CD14-positive monocyte (primary cell): ENCODE measurements at regions of chr11 and their contacts with region 1.

Region 1: DNA sequence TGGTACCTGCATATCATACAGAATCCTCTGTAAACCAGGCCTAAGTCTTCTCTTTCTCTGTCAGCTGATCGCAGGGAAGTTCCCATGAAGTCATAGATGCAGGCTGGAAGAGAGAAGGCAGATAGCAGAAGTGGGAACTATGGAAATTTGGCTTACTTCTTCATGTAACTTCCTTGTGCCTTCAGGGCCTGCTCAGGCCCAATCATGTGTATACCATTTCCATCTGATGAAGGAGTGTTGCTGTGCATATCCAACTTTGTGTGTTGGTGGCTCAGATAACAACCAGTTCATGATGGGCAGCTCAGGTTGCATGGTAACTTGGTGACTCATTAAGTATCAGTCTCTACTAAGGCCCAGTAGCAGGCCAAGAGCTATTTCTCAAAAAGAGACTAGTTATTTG is 53.1 kb upstream of the CEP295 start:
- DNase-seq: peak; percentile 83 to 97 (median 86)
- H3K4me3 ChIP-seq: peak overlapping the region in 1 of 3 experiments; percentile 22
- H3K4me3 Mint-ChIP-seq: no peak overlapping the region
- H3K27ac ChIP-seq: peak overlapping the region; percentile 57 to 83
- H3K27ac Mint-ChIP-seq: peak overlapping the region; percentile 86 to 98 (median 93)
- H3K4me1 ChIP-seq: peaks cover 74 to 77% of the 10 kb centered on the region in 2 donors
- H3K4me1 Mint-ChIP-seq: peaks cover 64% of the 10 kb centered on the region
- H3K27me3 ChIP-seq: no peaks in the 10 kb centered on the region
- H3K27me3 Mint-ChIP-seq: peaks cover 0 to 3% (median 0%) of the 10 kb centered on the region in 3 donors
- CTCF ChIP-seq: no peak

Region 2: GRCh38 chr11:93529707-93530467 is 78.5 kb before region 1 on chr11:
- intact Hi-C with region 1: loop called in 1 of 2 experiments (anchors 10 kb)
- DNase-seq: peak; percentile 59 to 71 (median 69)
- H3K4me3 ChIP-seq: peak overlapping the region in 1 of 3 experiments; percentile 30
- H3K4me3 Mint-ChIP-seq: peak overlapping the region in 1 of 2 donors; percentile 70
- H3K27ac ChIP-seq: peak overlapping the region; percentile 72 to 84
- H3K27ac Mint-ChIP-seq: peak overlapping the region; percentile 84 to 94 (median 92)
- H3K4me1 ChIP-seq: peaks cover 55 to 57% of the 10 kb centered on the region in 2 donors
- H3K4me1 Mint-ChIP-seq: peaks cover 70% of the 10 kb centered on the region
- H3K27me3 ChIP-seq: no peaks in the 10 kb centered on the region
- H3K27me3 Mint-ChIP-seq: peaks cover 0 to 3% (median 0%) of the 10 kb centered on the region in 3 donors
- CTCF ChIP-seq: no peak